ENCODE measurements at regions of chrX and their contacts with region 1.

Region 1: GRCh38 chrX:7132335-7133049 is 15.0 kb upstream of the STS start:
- DNase-seq: peak; percentile 9
- H3K4me3 Mint-ChIP-seq: no peak overlapping the region
- H3K27ac Mint-ChIP-seq: no peak overlapping the region
- H3K4me1 Mint-ChIP-seq: peaks cover 22% of the 10 kb centered on the region
- H3K27me3 Mint-ChIP-seq: no peaks in the 10 kb centered on the region

Region 2: DNA sequence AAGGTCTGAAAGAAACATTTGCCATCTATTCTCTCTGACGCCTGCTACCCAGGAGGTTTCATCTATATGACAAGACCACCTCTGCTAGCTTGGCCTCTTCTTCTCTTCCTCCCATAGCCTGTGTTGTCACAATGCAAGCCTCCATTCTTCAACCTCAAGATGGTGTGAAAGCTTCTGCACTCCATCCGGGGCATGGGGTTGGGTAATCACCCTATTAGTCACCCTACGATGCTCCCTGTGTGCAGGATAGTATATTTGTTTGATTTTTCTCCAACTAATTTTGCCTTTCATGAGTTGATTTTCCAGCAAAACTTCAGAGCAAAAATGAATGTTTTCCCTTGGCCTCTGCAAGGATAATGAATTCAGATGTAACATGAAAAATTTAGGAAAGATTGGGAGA is 112.9 kb before region 1 on chrX:
- intact Hi-C with region 1: no loop called
- DNase-seq: no peak
- H3K4me3 Mint-ChIP-seq: no peak overlapping the region
- H3K27ac Mint-ChIP-seq: no peak overlapping the region
- H3K4me1 Mint-ChIP-seq: no peaks in the 10 kb centered on the region
- H3K27me3 Mint-ChIP-seq: no peaks in the 10 kb centered on the region

Region 3: DNA sequence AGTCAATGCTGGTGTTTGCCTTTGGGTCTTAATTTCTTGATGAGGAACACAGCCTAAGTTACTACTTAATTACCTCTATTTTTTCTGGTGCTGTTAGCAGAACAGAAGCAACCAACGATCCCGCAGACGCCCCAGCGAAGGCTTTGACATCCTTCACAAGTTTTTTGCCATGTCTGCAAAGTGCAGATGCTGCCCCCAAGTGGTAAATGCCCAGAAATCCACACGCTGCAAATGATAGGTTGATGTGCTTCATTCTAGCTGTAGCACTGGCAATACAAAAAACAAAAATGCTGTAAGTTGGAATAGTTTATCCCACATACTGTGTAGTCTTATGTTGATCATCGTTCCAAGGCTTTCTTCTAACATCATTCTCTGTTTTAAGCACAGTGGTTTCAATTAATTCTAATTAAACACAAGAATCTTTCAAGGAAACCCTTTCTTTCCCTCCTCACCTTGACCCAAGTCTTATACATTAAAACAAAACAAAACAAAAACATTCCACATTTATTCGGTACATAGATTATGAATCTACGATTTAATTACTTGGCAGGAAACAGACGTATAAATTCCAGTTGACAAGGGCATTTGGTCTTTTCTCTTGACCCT is 793.5 kb after region 1 on chrX:
- intact Hi-C with region 1: loop called (anchors 5 kb)
- DNase-seq: peak; percentile 44
- H3K4me3 Mint-ChIP-seq: peak overlapping the region; percentile 54
- H3K27ac Mint-ChIP-seq: peak overlapping the region; percentile 17
- H3K4me1 Mint-ChIP-seq: peaks cover 8% of the 10 kb centered on the region
- H3K27me3 Mint-ChIP-seq: no peaks in the 10 kb centered on the region

Measured in activated T-helper 2 cell treated with anti-CD3 and anti-CD28 coated beads, Interferon-gamma antibody, Interleukin-2, Interleukin-4, amounts not matched to agents 10 μg/mL and 5 μg/mL and 100 μg/mL, durations not matched to agents 14 hours and 24 hours and 36 hours (primary cell).